ENCODE measurements at regions of chr2 and their contacts with region 1.

Region 1: GRCh38 chr2:111887819-111888223 is 3.8 kb upstream of the ANAPC1 start:
- DNase-seq: peak; percentile 79
- H3K4me3 Mint-ChIP-seq: no peak overlapping the region
- H3K27ac Mint-ChIP-seq: no peak overlapping the region
- H3K4me1 Mint-ChIP-seq: peaks cover 16% of the 10 kb centered on the region
- H3K27me3 Mint-ChIP-seq: peaks cover 7% of the 10 kb centered on the region

Region 2: DNA sequence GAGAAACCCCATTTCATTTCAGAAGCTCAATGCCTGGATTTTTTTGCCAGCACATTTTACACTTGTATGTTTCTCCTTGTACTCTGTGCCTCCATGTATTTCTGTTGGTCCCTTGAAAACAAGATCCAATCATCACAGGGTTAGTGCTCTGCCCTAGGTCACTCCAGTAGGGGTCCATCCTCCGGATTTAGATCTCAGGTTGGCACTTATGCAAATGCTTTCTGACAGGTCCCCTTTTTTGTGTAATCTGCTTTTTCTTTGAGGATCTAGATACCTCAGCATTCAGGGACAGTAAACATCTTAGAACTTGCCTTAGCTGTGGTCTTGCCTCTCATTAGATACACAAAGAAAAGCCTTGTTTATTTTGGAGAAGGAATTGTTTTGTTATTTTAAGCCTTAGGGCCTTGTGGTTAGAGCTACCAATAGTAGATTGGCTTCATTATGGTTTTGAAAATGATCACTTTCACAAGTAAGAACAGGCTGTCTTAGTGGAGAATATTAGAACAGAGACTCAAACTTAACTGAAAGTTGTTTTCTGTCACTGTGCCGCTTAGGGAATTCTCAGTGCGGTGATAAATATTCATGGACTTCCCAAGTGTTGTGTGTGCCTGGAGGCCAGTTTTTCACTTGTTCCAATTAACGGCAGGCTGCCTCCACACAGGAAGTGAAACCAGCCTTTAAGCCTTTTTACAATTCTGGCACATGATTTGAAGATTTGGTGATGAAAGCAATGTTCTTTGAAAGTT is 18.3 kb after region 1 on chr2:
- CTCF ChIA-PET with region 1: no interaction called
- DNase-seq: no peak
- H3K4me3 Mint-ChIP-seq: no peak overlapping the region
- H3K27ac Mint-ChIP-seq: no peak overlapping the region
- H3K4me1 Mint-ChIP-seq: peaks cover 16% of the 10 kb centered on the region
- H3K27me3 Mint-ChIP-seq: peaks cover 29% of the 10 kb centered on the region

Region 3: GRCh38 chr2:112048887-112049286 is 161.1 kb after region 1 on chr2:
- CTCF ChIA-PET with region 1: interaction called, 52 read pairs
- DNase-seq: peak; percentile 38
- H3K4me3 Mint-ChIP-seq: no peak overlapping the region
- H3K27ac Mint-ChIP-seq: no peak overlapping the region
- H3K4me1 Mint-ChIP-seq: peaks cover 10% of the 10 kb centered on the region
- H3K27me3 Mint-ChIP-seq: peaks cover 31% of the 10 kb centered on the region